ENCODE measurements at regions of chr2 and their contacts with region 1.

Region 1: DNA sequence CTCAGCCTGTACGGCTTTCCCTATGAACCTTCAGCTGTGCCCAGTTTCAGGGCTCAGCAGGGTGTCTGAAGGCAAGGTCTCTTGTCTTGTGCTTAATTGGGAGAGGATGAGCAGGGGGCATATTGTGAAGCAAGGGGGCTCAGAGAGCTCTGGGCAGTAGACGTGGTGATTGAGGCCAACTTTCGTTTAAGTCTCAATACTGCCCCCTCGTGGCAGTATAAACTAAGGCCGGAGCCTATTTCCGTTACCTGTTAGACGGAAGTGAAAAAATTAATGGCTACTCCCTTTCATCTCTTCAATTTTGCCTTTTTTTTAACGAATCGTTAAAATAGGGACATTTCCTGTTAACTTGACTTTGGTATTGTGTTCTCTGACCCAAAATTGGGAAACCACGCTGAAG is 193.4 kb downstream of the TDRD15 start:
- DNase-seq: no peak
- H3K4me3 ChIP-seq: no peak overlapping the region
- H3K27ac ChIP-seq: no peak overlapping the region
- H3K4me1 ChIP-seq: no peaks in the 10 kb centered on the region
- H3K27me3 ChIP-seq: no peaks in the 10 kb centered on the region
- CTCF ChIP-seq: peak in 3 of 4 experiments; percentile 31 to 58 (median 40)
- POLR2A ChIP-seq: no peak

Region 2: DNA sequence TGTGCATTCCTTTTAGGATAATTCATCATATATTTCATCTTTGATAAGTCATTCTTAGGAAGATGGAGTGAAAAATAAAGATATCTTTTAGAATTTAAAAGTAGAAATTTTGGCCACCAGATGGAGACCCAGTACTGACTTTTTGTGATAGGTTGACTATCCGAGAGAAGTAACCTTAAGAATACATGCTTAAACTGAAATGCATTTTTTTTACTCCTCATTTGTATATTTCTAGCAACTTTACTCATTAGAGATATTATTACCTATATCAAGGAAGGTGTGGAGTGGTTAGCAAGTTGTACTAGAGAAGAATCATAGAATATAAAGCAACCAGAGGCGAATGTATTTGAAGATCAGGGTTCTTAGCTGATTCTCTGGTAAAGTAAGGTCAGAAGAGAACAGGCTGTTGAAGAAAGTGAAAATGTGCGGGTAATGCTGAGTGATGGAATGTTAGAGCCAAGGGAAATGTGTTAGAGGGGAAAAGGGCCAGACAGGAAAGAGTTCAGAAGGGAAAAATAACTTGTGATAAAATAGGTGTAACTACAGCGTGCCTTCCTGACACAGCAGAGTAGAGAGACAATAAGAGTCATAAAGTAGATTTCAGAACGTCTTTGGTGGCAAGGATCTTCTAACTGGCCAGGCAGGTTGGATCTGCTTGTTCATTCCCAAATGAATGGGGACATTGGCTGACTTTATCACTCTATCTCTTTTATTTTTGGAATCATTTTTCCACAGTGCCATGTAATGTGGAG is 141.1 kb before region 1 on chr2:
- intact Hi-C with region 1: loop called (anchors 5 kb)
- DNase-seq: no peak
- H3K4me3 ChIP-seq: no peak overlapping the region
- H3K27ac ChIP-seq: no peak overlapping the region
- H3K4me1 ChIP-seq: no peaks in the 10 kb centered on the region
- H3K27me3 ChIP-seq: no peaks in the 10 kb centered on the region
- CTCF ChIP-seq: peak in 3 of 4 experiments; percentile 22 to 52 (median 41)
- POLR2A ChIP-seq: no peak

Measured in prostate gland (tissue), 2 donors.